MCF 10A (cell line): ENCODE measurements at regions of chr2 and their contacts with region 1.

Region 1: GRCh38 chr2:102240640-102241370 is 54.0 kb downstream of the IL1RL2 start:
- DNase-seq: peak; percentile 87
- H3K4me3 Mint-ChIP-seq: no peak overlapping the region
- H3K27ac Mint-ChIP-seq: no peak overlapping the region
- H3K4me1 Mint-ChIP-seq: peaks cover 6% of the 10 kb centered on the region
- H3K27me3 Mint-ChIP-seq: no peaks in the 10 kb centered on the region
- CTCF ChIP-seq: peak; percentile 97

Region 2: DNA sequence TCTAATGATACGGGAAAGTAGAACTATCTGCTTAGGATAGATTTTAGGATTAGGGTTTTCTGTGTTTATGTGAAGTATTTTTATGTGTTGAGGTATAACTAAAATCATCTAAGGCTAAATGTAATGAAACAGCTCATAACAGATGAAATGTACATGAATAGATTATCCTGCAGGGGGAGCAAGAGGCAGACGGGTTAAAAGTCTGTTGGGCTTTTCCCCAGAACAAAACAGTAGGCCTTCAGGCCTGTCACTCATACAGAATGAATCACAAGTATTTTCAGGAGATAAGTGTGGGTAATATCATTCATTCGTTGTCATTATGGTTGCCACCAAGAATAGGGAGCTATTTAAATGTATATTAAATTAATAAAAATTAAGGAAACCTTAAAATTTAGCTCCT is 356.9 kb before region 1 on chr2:
- CTCF ChIA-PET with region 1: interaction called, 65 read pairs
- POLR2A ChIA-PET with region 1: interaction called, 6 read pairs
- intact Hi-C with region 1: loop called (anchors 5 kb)
- DNase-seq: peak; percentile 76
- H3K4me3 Mint-ChIP-seq: no peak overlapping the region
- H3K27ac Mint-ChIP-seq: no peak overlapping the region
- H3K4me1 Mint-ChIP-seq: no peaks in the 10 kb centered on the region
- H3K27me3 Mint-ChIP-seq: no peaks in the 10 kb centered on the region
- CTCF ChIP-seq: peak; percentile 42

Region 3: DNA sequence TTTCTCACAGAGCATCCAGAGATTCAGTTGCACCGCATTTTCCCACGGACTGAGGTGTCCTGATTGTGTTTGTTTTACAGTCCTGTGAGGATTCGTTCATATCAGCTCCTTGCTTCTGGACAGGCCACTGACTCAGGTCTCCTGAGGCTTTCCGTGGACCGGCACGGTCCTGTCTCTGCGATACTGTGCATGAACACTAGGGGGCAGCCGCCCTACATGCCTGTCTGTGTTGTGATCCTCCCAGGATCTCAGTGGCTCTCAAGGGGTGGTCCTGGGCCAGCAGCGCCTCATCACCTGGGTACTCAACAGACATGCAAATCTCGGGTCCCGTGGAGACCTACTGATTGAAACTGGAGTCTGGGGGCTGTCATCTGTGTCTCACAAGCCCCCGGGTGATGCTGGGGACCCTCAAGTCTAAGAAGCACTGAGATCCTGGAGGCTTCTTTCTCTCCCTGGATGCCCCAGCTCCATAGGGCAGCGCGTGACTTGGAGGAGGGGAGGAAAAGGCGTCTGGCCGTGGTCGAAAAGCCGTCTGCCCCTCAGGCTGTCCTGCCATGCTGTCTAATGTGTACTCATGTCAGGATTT is 220.1 kb before region 1 on chr2:
- CTCF ChIA-PET with region 1: interaction called, 115 read pairs
- POLR2A ChIA-PET with region 1: interaction called, 14 read pairs
- intact Hi-C with region 1: loop called (anchors 1 kb)
- DNase-seq: peak; percentile 84
- H3K4me3 Mint-ChIP-seq: no peak overlapping the region
- H3K27ac Mint-ChIP-seq: no peak overlapping the region
- H3K4me1 Mint-ChIP-seq: peaks cover 18% of the 10 kb centered on the region
- H3K27me3 Mint-ChIP-seq: no peaks in the 10 kb centered on the region
- CTCF ChIP-seq: peak; percentile 98

Region 4: DNA sequence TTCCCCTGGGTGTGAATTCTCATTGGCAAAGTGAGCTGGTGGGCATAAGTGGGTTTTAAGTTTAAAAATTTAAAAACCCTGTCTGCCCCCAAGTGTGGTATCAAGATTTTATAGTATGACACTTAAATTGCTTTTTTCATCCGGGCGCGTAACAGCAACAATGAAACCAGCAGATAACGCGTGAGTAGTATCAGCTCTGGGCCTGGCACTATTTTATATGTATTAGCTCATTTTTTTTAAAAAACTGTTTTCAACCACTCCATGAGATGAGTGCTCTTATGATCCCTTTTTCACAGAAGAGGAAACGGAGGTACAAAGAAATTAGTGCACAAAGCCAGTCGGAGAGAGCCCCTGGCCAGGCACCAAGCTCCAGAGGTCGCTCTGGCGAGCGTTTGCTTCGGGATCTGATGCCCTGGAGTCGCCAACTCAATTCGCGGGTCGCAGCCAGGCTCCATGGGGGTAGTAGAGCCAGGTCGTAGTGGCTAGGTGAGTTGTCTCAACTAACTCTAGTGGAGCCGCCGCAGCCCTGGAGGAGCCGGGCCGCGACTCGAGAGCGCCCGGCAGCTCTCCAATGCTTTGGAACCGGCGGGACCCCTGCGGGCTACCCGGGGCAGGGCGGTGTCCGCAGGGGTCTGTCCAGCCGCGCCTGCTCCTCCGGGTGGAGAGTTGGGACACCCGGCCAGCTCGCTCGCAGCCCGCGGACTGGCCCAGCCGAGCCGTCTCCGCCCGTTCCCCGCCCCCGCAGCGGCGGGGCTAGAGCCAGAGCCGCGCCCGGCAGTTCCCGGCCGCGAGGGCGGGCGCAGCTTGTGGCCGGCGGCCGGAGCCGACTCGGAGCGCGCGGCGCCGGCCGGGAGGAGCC is 98.6 kb before region 1 on chr2 and contains the start of gene IL1R1:
- CTCF ChIA-PET with region 1: interaction called, 27 read pairs
- POLR2A ChIA-PET with region 1: interaction called, 3 read pairs
- intact Hi-C with region 1: no loop called
- DNase-seq: peak; percentile 80
- H3K4me3 Mint-ChIP-seq: peak within 1 kb of the TSS; percentile 81
- H3K27ac Mint-ChIP-seq: peak within 1 kb of the TSS; percentile 68
- H3K4me1 Mint-ChIP-seq: no peaks in the 10 kb centered on the region
- H3K27me3 Mint-ChIP-seq: no peaks in the 10 kb centered on the region
- CTCF ChIP-seq: no peak
- total RNA-seq, gene IL1R1: 5.2 and 6.0 TPM in 2 replicates

Region 5: DNA sequence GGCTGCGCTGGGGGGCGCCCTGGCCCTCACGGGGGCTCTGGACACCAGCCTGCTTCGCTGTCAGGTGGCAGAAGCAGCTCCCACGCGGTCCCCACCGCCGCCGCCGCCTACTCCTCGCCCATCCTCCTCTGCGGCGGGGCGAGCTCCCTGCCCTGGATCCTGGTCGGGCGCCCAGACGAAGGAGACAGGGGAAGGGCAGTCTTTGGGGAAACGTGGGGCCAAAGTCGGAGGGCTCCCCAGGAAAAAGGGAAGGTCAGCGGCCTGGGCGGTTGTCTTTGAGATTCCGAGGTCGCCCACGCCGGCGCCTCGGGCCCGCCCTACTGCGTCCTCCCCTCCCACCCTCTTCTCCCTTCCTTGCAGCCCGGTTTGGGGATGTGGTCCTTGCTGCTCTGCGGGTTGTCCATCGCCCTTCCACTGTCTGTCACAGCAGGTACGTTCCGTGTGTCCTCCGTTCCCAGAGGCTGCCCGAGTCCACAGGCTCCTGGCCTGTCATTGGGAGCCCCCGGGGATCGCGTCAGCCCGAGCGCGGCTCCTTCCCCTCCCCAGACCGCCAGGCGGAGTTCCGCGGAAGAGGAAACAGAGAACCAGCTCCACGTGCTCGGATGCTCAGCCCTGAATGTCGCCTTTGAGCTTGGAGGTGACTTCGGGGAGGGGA is 53.2 kb before region 1 on chr2:
- CTCF ChIA-PET with region 1: interaction called, 29 read pairs
- POLR2A ChIA-PET with region 1: interaction called, 3 read pairs
- intact Hi-C with region 1: loop called (anchors 1 kb)
- DNase-seq: no peak
- H3K4me3 Mint-ChIP-seq: no peak overlapping the region
- H3K27ac Mint-ChIP-seq: no peak overlapping the region
- H3K4me1 Mint-ChIP-seq: peaks cover 5% of the 10 kb centered on the region
- H3K27me3 Mint-ChIP-seq: no peaks in the 10 kb centered on the region
- CTCF ChIP-seq: no peak

Region 6: GRCh38 chr2:102350137-102350793 is 109.5 kb after region 1 on chr2:
- CTCF ChIA-PET with region 1: interaction called, 10 read pairs
- POLR2A ChIA-PET with region 1: no interaction called
- intact Hi-C with region 1: no loop called
- DNase-seq: no peak
- H3K4me3 Mint-ChIP-seq: no peak overlapping the region
- H3K27ac Mint-ChIP-seq: no peak overlapping the region
- H3K4me1 Mint-ChIP-seq: no peaks in the 10 kb centered on the region
- H3K27me3 Mint-ChIP-seq: no peaks in the 10 kb centered on the region
- CTCF ChIP-seq: no peak

Region 7: GRCh38 chr2:102449370-102449974 is 208.7 kb after region 1 on chr2:
- CTCF ChIA-PET with region 1: interaction called, 57 read pairs
- POLR2A ChIA-PET with region 1: no interaction called
- intact Hi-C with region 1: no loop called
- DNase-seq: peak; percentile 49
- H3K4me3 Mint-ChIP-seq: no peak overlapping the region
- H3K27ac Mint-ChIP-seq: no peak overlapping the region
- H3K4me1 Mint-ChIP-seq: no peaks in the 10 kb centered on the region
- H3K27me3 Mint-ChIP-seq: no peaks in the 10 kb centered on the region
- CTCF ChIP-seq: peak; percentile 64

Region 8: GRCh38 chr2:102771114-102771513 is 530.3 kb after region 1 on chr2:
- CTCF ChIA-PET with region 1: no interaction called
- POLR2A ChIA-PET with region 1: no interaction called
- intact Hi-C with region 1: no loop called
- DNase-seq: no peak
- H3K4me3 Mint-ChIP-seq: no peak overlapping the region
- H3K27ac Mint-ChIP-seq: no peak overlapping the region
- H3K4me1 Mint-ChIP-seq: no peaks in the 10 kb centered on the region
- H3K27me3 Mint-ChIP-seq: no peaks in the 10 kb centered on the region
- CTCF ChIP-seq: no peak

Region 9: DNA sequence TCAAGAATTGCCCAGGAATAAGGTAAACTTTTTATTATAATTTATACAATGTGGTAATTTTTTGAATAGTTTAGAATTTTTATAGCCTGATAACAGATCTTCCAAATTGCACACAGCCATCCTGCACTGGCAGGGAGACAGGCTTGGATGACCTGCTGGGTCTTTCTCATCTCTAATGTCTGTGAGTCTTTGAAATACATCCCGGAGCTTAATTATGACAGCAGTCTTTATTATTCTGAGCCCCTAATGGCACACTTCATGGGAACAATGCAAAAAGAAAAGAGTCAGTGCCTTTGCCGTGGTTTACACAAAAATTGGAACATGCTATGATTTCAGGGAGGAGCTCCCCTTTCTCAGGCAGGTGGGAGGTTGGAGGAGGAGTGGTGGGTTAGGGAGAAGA is 592.0 kb after region 1 on chr2:
- CTCF ChIA-PET with region 1: no interaction called
- POLR2A ChIA-PET with region 1: no interaction called
- intact Hi-C with region 1: no loop called
- DNase-seq: no peak
- H3K4me3 Mint-ChIP-seq: no peak overlapping the region
- H3K27ac Mint-ChIP-seq: no peak overlapping the region
- H3K4me1 Mint-ChIP-seq: no peaks in the 10 kb centered on the region
- H3K27me3 Mint-ChIP-seq: no peaks in the 10 kb centered on the region
- CTCF ChIP-seq: no peak